Naive thymus-derived CD4-positive, alpha-beta T cell (primary cell): ENCODE measurements at regions of chr9 and their contacts with region 1.

Region 1: GRCh38 chr9:109119439-109120203 is at the start of gene TMEM245:
- DNase-seq: peak; percentile 78 to 97 (median 95)
- ATAC-seq: peak; percentile 97
- H3K4me3 ChIP-seq: peak within 1 kb of the TSS; percentile 84
- H3K4me3 Mint-ChIP-seq: peak within 1 kb of the TSS; percentile 93 to 98 (median 94)
- H3K27ac ChIP-seq: peak within 1 kb of the TSS; percentile 92
- H3K27ac Mint-ChIP-seq: peak within 1 kb of the TSS; percentile 76 to 95 (median 91)
- H3K4me1 ChIP-seq: peaks cover 23 to 31% of the 10 kb centered on the region in 2 donors
- H3K4me1 Mint-ChIP-seq: peaks cover 36 to 47% (median 39%) of the 10 kb centered on the region in 7 donors
- H3K27me3 ChIP-seq: no peaks in the 10 kb centered on the region
- H3K27me3 Mint-ChIP-seq: no peaks in the 10 kb centered on the region
- total RNA-seq, gene TMEM245: 25.5 to 76.7 (median 29.2) TPM

Region 2: DNA sequence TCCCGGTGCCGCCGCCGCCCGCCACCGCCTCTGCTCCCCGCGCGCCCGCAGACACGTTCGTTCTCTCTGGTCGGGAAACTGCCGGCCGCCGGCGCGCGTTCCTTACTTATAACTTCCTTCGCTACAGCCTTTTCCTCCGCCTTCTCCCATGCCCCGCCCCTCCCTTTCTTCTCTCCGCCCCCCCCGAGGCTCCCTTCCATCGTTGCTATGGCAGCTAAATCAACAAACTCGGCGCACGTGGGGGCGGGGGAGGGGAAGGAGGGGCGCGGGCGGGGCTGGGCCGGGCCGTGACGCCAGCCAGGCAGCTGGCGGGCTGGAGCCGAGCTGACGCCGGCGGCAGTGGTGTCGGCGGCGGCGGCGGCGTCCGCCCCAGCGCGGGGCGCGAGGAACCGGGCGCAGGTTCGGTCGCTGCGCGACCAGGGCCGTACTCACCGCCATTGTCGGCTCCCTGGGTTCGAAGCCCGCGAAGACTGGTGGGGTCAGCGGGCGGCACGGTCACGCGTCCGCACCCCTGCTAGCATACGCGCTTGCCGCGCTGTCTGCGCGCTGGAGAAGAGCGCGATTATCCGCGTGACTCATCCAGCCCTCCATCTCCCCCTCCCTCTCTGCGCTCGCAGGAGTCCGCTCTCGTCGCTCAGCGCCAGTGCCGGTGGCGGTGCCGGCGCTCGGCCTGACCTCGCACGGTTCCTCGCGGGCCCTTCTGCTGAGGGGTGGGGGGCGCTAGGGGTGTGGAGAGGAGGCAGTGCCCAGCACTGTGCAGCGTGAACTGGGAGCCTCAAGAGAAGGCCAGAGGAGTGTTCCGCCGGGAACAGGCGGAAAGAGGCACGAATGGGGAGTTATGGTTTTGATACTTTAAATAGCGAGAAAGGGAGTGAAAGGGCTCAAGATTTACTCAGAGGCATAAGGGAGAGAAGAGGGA is 1629.7 kb before region 1 on chr9 and contains the start of gene KLF4:
- CTCF ChIA-PET with region 1: no interaction called
- POLR2A ChIA-PET with region 1: no interaction called
- intact Hi-C with region 1: loop called in 1 of 2 experiments (anchors 10 kb)
- DNase-seq: peak in 7 of 9 donors; percentile 7 to 72 (median 23)
- ATAC-seq: peak; percentile 77
- H3K4me3 ChIP-seq: no peak within 1 kb of the TSS
- H3K4me3 Mint-ChIP-seq: peak within 1 kb of the TSS; percentile 59 to 85 (median 73)
- H3K27ac ChIP-seq: no peak within 1 kb of the TSS
- H3K27ac Mint-ChIP-seq: peak within 1 kb of the TSS in 1 of 9 donors; percentile 80
- H3K4me1 ChIP-seq: peaks cover 0 to 5% of the 10 kb centered on the region in 2 donors
- H3K4me1 Mint-ChIP-seq: peaks cover 5 to 28% (median 15%) of the 10 kb centered on the region in 7 donors
- H3K27me3 ChIP-seq: peaks cover 0 to 3% of the 10 kb centered on the region in 2 donors
- H3K27me3 Mint-ChIP-seq: peaks cover 56 to 71% (median 60%) of the 10 kb centered on the region in 5 donors
- total RNA-seq, gene KLF4: 0.29 to 266 (median 1.0) TPM

Region 3: GRCh38 chr9:109086242-109086641 is 33.4 kb before region 1 on chr9:
- CTCF ChIA-PET with region 1: interaction called, 4 read pairs
- POLR2A ChIA-PET with region 1: interaction called, 9 read pairs
- intact Hi-C with region 1: loop called (anchors 5 kb)
- DNase-seq: no peak
- ATAC-seq: peak; percentile 72
- H3K4me3 ChIP-seq: no peak overlapping the region
- H3K4me3 Mint-ChIP-seq: no peak overlapping the region
- H3K27ac ChIP-seq: no peak overlapping the region
- H3K27ac Mint-ChIP-seq: peak overlapping the region in 2 of 9 donors; percentile 31 to 43
- H3K4me1 ChIP-seq: no peaks in the 10 kb centered on the region
- H3K4me1 Mint-ChIP-seq: peaks cover 6 to 20% (median 9%) of the 10 kb centered on the region in 7 donors
- H3K27me3 ChIP-seq: no peaks in the 10 kb centered on the region
- H3K27me3 Mint-ChIP-seq: no peaks in the 10 kb centered on the region

Region 4: DNA sequence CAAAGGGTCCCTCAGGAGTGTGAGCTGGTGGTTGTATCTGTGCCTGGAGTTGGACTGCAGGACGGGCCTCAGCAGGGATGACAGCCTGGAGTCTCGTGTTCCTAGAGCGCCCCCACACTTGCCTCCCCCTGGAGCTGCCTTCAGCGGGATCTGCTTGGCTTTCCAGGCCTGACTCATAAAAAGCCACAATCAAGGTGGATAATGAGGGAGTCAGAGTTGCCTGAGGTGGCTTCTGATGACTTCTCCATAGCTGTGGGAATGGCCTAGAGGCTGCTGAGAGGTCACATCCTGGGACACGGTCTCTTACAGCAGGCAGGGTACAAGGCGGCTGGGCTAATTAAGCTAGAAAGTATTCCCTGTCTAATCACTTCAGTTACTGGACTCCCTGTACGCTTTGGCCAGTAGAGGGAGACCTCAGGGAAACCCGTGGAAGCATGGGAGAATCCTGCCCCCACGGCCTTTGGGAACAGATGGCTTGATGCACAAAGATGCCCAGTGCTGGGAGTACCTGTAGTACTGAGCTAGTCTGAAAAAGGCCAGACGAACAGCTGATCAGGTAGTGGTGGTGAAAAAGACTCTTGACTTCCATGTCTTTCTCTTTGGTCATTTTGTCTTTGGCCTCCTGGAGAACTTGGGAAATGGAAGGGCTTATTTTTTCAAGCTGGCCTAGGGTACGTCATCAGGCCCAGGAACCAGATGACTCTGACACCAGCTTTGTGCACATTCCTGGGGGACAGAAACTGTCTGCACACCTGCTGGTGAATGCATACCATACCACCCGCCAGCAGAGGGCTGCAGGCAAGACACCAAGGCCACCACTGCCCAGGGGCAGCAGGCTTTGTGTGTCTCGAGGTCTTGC is 63.5 kb after region 1 on chr9:
- CTCF ChIA-PET with region 1: no interaction called
- POLR2A ChIA-PET with region 1: no interaction called
- intact Hi-C with region 1: loop called (anchors 1 to 5 kb)
- DNase-seq: no peak
- ATAC-seq: no peak
- H3K4me3 ChIP-seq: no peak overlapping the region
- H3K4me3 Mint-ChIP-seq: no peak overlapping the region
- H3K27ac ChIP-seq: no peak overlapping the region
- H3K27ac Mint-ChIP-seq: peak overlapping the region in 1 of 9 donors; percentile 48
- H3K4me1 ChIP-seq: no peaks in the 10 kb centered on the region
- H3K4me1 Mint-ChIP-seq: peaks cover 0 to 25% (median 20%) of the 10 kb centered on the region in 7 donors
- H3K27me3 ChIP-seq: no peaks in the 10 kb centered on the region
- H3K27me3 Mint-ChIP-seq: peaks cover 0 to 25% (median 0%) of the 10 kb centered on the region in 5 donors

Region 5: GRCh38 chr9:109411798-109412352 is 292.3 kb after region 1 on chr9:
- CTCF ChIA-PET with region 1: no interaction called
- POLR2A ChIA-PET with region 1: no interaction called
- intact Hi-C with region 1: loop called in 1 of 2 experiments (anchors 10 kb)
- DNase-seq: no peak
- ATAC-seq: no peak
- H3K4me3 ChIP-seq: no peak overlapping the region
- H3K4me3 Mint-ChIP-seq: peak overlapping the region in 1 of 10 donors; percentile 48
- H3K27ac ChIP-seq: no peak overlapping the region
- H3K27ac Mint-ChIP-seq: peak overlapping the region in 1 of 9 donors; percentile 81
- H3K4me1 ChIP-seq: no peaks in the 10 kb centered on the region
- H3K4me1 Mint-ChIP-seq: peaks cover 0 to 53% (median 0%) of the 10 kb centered on the region in 7 donors
- H3K27me3 ChIP-seq: no peaks in the 10 kb centered on the region
- H3K27me3 Mint-ChIP-seq: peaks cover 0 to 21% (median 17%) of the 10 kb centered on the region in 5 donors

Region 6: DNA sequence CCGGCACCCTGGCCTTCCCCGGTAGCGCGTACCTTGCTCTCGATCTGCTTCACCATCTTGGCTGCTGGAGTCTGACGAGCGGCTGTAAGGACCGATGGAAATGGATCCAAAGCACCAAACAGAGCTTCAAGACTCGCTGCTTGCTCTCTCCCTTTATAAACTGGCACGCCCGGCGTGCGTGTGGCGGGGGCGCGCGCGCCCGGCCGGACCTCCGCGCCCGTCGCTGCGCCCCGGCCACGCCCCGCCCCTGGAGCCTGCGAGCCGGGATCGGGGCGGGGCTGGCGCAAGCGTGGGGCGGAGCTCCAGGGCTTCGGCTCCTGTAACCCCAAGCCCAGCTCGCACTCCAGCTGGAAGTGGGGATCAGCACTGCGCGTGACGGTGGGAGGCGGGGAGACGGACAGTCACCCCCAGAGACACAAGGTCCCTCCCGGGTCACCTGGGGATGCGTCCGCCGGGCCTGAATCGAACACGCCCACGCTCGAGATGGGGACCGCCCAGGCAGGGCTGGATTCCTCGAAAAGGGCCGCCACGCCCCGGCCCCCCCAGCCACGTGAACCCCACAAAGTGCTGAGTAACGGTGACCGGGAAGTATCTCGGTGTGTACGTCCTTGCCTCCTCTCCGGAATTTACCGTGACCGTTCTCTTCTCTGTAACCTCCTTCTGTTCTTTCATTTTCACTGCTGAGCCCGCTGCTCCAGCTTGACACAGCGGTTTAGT is 1136.9 kb after region 1 on chr9 and contains the start of gene TXN:
- CTCF ChIA-PET with region 1: no interaction called
- POLR2A ChIA-PET with region 1: no interaction called
- intact Hi-C with region 1: loop called in 1 of 2 experiments (anchors 5 kb)
- DNase-seq: peak; percentile 56 to 91 (median 74)
- ATAC-seq: peak; percentile 88
- H3K4me3 ChIP-seq: peak within 1 kb of the TSS; percentile 85
- H3K4me3 Mint-ChIP-seq: peak within 1 kb of the TSS; percentile 83 to 99 (median 96)
- H3K27ac ChIP-seq: peak within 1 kb of the TSS; percentile 65
- H3K27ac Mint-ChIP-seq: peak within 1 kb of the TSS; percentile 87 to 97 (median 89)
- H3K4me1 ChIP-seq: peaks cover 4 to 11% of the 10 kb centered on the region in 2 donors
- H3K4me1 Mint-ChIP-seq: peaks cover 16 to 52% (median 32%) of the 10 kb centered on the region in 7 donors
- H3K27me3 ChIP-seq: no peaks in the 10 kb centered on the region
- H3K27me3 Mint-ChIP-seq: peaks cover 0 to 5% (median 0%) of the 10 kb centered on the region in 5 donors
- total RNA-seq, gene TXN: 22.2 to 276 (median 24.9) TPM